SK-N-SH (cell line): ENCODE measurements at regions of chr7 and their contacts with region 1.

Region 1: DNA sequence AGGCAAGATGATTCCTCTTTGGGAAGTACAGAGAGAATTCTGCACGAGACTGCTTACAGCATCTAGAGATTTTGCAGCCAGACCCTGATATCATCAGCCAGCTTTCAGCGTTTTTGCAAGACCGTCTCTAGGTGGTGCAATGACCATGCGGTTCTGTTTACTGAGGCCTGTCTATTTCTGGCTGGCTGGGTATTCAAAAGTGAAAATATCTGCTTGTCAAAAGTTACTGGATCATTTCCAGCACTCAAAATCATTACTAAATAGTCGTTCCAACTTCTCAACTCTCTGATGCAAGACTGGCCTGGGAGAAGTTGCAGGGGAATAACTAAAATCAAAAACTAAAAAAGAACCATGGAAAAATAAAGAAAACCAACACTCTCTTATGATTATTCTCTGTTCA is 240.1 kb downstream of the ELMO1 start:
- DNase-seq: peak; percentile 73
- H3K4me3 ChIP-seq: no peak overlapping the region
- H3K27ac ChIP-seq: peak overlapping the region in 1 of 2 experiments; percentile 29; a peak in 1 of 4 replicates
- H3K4me1 ChIP-seq: peaks cover 0 to 3% of the 10 kb centered on the region in 2 experiments; a peak in 2 of 4 replicates
- H3K27me3 ChIP-seq: no peaks in the 10 kb centered on the region
- CTCF ChIP-seq: peak; percentile 61
- EP300 ChIP-seq: no peak
- RAD21 ChIP-seq: peak; percentile 98

Region 2: DNA sequence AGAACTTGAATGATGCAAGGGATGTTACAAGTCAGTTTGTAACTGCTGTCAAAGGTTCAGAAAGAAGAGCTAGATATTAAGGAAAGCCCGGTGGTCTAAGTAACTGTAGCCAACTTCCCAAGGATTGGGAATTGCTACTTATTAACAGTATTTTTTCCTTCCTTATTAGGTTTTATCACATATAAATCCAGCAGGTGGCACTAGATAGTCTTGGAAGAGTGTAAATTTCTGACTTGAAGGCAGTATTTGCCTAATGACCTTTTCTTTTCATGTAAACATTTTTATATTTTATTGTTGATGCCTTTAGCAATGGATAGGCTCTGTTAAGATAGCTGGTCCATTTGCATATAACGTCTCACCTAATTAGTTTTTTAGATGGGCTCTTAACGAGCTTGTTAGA is 767.6 kb before region 1 on chr7:
- CTCF ChIA-PET with region 1: interaction called, 134 read pairs
- POLR2A ChIA-PET with region 1: no interaction called
- DNase-seq: peak; percentile 53
- H3K4me3 ChIP-seq: no peak overlapping the region
- H3K27ac ChIP-seq: no peak overlapping the region
- H3K4me1 ChIP-seq: no peaks in the 10 kb centered on the region
- H3K27me3 ChIP-seq: no peaks in the 10 kb centered on the region
- CTCF ChIP-seq: peak; percentile 77
- EP300 ChIP-seq: no peak
- RAD21 ChIP-seq: peak; percentile 72

Region 3: GRCh38 chr7:37218956-37219355 is 10.4 kb after region 1 on chr7:
- CTCF ChIA-PET with region 1: interaction called, 22 read pairs
- POLR2A ChIA-PET with region 1: no interaction called
- DNase-seq: no peak
- H3K4me3 ChIP-seq: no peak overlapping the region
- H3K27ac ChIP-seq: no peak overlapping the region
- H3K4me1 ChIP-seq: no peaks in the 10 kb centered on the region
- H3K27me3 ChIP-seq: no peaks in the 10 kb centered on the region
- CTCF ChIP-seq: no peak
- EP300 ChIP-seq: no peak
- RAD21 ChIP-seq: no peak

Region 4: DNA sequence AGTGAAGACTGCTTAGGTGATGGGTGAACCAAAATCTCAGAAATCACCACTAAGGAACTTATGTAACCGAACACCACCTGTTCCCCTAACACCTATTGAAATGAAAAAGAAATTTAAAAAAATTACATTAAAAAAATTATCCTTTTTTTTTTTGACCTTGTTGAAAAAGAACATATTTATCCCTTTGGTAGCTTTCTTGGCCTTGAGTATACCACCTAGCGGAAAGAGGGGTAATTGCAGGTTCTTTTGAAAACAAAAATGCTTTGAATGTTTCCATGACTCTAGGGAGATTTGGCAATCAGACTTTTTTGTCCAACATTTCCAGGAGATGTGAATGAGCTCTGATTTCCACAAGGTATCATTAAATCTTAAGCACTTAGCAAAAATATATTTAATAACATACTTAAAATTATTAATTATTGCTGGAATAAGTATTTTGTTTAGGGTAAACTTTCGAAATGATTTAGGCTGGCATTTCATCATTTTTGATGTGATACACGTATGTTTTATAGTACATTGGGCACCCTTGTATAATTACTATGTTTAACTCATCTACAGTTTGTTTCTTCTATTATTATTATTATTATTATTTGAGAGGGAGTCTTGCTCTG is 287.2 kb after region 1 on chr7:
- CTCF ChIA-PET with region 1: interaction called, 14 read pairs
- POLR2A ChIA-PET with region 1: no interaction called
- DNase-seq: peak; percentile 63
- H3K4me3 ChIP-seq: no peak overlapping the region
- H3K27ac ChIP-seq: no peak overlapping the region
- H3K4me1 ChIP-seq: no peaks in the 10 kb centered on the region
- H3K27me3 ChIP-seq: no peaks in the 10 kb centered on the region
- CTCF ChIP-seq: peak; percentile 68
- EP300 ChIP-seq: no peak
- RAD21 ChIP-seq: peak; percentile 69

Region 5: DNA sequence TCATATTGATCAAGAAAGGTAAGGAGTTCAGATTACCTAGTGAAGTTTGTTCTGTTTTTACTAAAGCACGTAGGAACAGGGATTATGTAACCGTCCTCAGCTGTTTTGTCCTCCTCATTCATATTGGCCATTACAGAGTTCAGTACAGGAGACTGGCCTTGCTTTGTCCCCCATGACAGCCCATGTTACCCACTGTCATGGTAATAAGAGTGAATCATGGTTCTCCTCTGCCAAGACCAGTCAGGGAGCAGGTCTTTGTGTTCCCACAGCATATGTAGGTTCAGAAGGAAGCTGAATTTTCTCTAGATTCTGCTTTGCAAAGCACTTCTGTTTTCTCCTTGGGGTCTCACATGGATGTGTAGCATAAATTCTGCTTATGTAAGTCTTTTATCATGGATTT is 368.9 kb after region 1 on chr7:
- CTCF ChIA-PET with region 1: no interaction called
- POLR2A ChIA-PET with region 1: no interaction called
- DNase-seq: no peak
- H3K4me3 ChIP-seq: no peak overlapping the region
- H3K27ac ChIP-seq: no peak overlapping the region
- H3K4me1 ChIP-seq: peaks cover 0 to 3% of the 10 kb centered on the region in 2 experiments; a peak in 2 of 4 replicates
- H3K27me3 ChIP-seq: no peaks in the 10 kb centered on the region
- CTCF ChIP-seq: no peak
- EP300 ChIP-seq: no peak
- RAD21 ChIP-seq: no peak

Region 6: DNA sequence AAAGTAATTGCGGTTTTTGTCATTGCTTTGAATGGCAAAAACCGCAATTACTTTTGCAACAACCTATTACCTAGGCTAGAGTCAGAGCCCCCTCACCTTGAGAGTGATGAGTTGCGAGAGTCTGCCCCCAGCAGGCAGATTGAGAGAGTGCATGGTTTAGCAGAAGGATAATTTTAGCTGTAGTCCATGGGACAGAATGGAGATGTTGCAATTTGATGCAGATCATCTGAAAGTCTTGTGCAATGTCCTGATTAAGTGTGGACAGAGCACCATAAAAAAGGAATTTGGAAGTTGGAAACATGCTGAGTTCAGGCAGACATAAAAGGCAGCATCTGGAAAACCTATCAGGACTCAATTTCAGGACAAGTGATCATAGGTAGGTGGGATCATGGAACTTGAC is 523.7 kb after region 1 on chr7:
- CTCF ChIA-PET with region 1: interaction called, 13 read pairs
- POLR2A ChIA-PET with region 1: no interaction called
- DNase-seq: peak; percentile 51
- H3K4me3 ChIP-seq: no peak overlapping the region
- H3K27ac ChIP-seq: no peak overlapping the region
- H3K4me1 ChIP-seq: no peaks in the 10 kb centered on the region
- H3K27me3 ChIP-seq: no peaks in the 10 kb centered on the region
- CTCF ChIP-seq: no peak
- EP300 ChIP-seq: no peak
- RAD21 ChIP-seq: peak; percentile 67

Region 7: GRCh38 chr7:37853474-37853873 is 644.9 kb after region 1 on chr7:
- CTCF ChIA-PET with region 1: interaction called, 32 read pairs
- POLR2A ChIA-PET with region 1: no interaction called
- DNase-seq: peak; percentile 32
- H3K4me3 ChIP-seq: no peak overlapping the region; a peak in 1 of 4 replicates
- H3K27ac ChIP-seq: no peak overlapping the region
- H3K4me1 ChIP-seq: no peaks in the 10 kb centered on the region
- H3K27me3 ChIP-seq: no peaks in the 10 kb centered on the region
- CTCF ChIP-seq: peak; percentile 51
- EP300 ChIP-seq: no peak
- RAD21 ChIP-seq: peak; percentile 64